ENCODE measurements at regions of chr2 and their contacts with region 1.

Region 1: GRCh38 chr2:185738679-185739472 is at the start of gene FSIP2:
- DNase-seq: peak in 1 of 2 donors; percentile 62
- H3K4me3 ChIP-seq: peak within 1 kb of the TSS; percentile 25 to 53 (median 33)
- H3K27ac ChIP-seq: no peak within 1 kb of the TSS
- H3K4me1 ChIP-seq: no peaks in the 10 kb centered on the region
- H3K27me3 ChIP-seq: peaks cover 0 to 13% of the 10 kb centered on the region in 2 donors
- CTCF ChIP-seq: peak in 2 of 3 donors; percentile 10 to 51
- POLR2A ChIP-seq: no peak
- total RNA-seq, gene FSIP2: 0.64 to 2.3 (median 1.6) TPM

Region 2: DNA sequence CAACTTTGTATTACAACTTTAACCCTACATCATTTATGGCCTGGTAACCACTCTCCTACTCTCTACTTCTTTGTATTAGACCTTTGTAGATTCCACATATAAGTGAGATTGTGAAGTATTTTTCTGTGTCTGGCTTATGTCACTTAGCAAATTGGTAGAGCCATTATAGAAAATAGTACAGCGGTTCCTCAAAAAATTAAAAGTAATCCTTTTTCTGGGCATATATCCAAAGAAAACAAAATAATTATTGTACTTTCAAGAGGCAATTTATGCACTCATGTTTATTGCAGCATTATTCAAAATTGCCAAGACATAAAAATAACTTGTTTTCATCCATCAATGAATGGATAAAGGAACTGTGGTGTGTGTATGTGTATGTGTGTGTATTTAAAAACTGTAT is 537.8 kb before region 1 on chr2:
- intact Hi-C with region 1: loop called (anchors 5 kb)
- DNase-seq: no peak
- H3K4me3 ChIP-seq: no peak overlapping the region
- H3K27ac ChIP-seq: no peak overlapping the region
- H3K4me1 ChIP-seq: no peaks in the 10 kb centered on the region
- H3K27me3 ChIP-seq: no peaks in the 10 kb centered on the region
- CTCF ChIP-seq: no peak
- POLR2A ChIP-seq: no peak

Region 3: GRCh38 chr2:185785851-185786473 is 47.1 kb after region 1 on chr2:
- intact Hi-C with region 1: no loop called
- DNase-seq: no peak
- H3K4me3 ChIP-seq: no peak overlapping the region
- H3K27ac ChIP-seq: no peak overlapping the region
- H3K4me1 ChIP-seq: no peaks in the 10 kb centered on the region
- H3K27me3 ChIP-seq: no peaks in the 10 kb centered on the region
- CTCF ChIP-seq: no peak
- POLR2A ChIP-seq: no peak

Region 4: DNA sequence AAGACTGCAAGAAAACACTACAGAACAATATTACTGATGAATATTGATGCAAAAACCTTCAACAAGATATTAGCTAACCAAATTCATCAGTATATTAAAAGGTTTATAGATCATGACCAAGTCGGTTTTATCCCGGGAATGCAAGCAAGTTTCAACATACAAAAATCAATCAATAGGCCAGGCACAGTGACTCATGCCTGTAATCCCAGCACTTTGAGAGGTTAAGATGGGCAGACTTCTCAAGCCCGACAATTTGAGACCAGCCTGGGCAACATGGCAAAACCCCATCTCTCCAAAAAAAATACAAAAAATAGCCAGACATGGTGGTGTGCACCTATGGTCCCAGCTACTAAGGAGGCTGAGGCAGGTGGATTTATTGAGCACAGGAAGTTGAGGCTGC is 82.6 kb after region 1 on chr2:
- intact Hi-C with region 1: loop called (anchors 5 kb)
- DNase-seq: no peak
- H3K4me3 ChIP-seq: no peak overlapping the region
- H3K27ac ChIP-seq: no peak overlapping the region
- H3K4me1 ChIP-seq: no peaks in the 10 kb centered on the region
- H3K27me3 ChIP-seq: no peaks in the 10 kb centered on the region
- CTCF ChIP-seq: no peak
- POLR2A ChIP-seq: no peak